GM12878 (cell line): ENCODE measurements at regions of chr3 and their contacts with region 1.

Region 1: DNA sequence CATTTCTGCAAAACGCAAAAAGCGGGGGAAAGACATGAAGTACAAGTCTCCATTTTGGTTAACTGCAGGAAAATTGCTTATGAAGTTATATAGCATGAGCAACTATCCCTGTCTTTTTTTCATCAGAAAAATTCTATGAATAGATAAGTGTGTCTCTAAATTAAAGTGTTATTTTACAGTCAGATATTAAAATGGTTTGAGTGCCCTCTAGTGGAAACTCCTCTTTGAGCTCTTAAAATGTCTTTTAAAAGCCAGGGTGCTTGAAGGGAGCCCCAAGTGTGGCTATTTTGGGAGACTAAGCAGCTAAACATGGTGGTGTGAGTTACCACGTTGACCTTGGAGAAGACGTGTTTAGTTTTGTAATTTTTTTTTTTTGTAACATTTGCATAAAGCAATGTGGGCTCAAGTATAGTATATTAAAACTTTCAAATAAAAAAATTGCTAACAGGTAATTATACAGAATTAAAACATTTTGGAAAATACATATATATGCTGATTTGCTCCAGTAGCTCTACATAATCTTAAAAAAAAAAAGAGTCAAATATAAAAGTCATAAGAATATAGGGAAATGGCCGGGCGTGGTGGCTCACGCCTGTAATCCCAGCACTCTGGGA is 77.2 kb downstream of the PPP2R3A start:
- DNase-seq: no peak
- ATAC-seq: peak; percentile 55; the same call in 2 of the 3 replicates
- H3K4me3 ChIP-seq: no peak overlapping the region
- H3K27ac ChIP-seq: no peak overlapping the region
- H3K4me1 ChIP-seq: no peaks in the 10 kb centered on the region
- H3K27me3 ChIP-seq: no peaks in the 10 kb centered on the region; a peak in 1 of 4 replicates
- CTCF ChIP-seq: peak; percentile 28 to 57 (median 48); a peak in 5 of 6 replicates
- EP300 ChIP-seq: no peak
- POLR2A ChIP-seq: no peak
- RAD21 ChIP-seq: peak; percentile 53

Region 2: GRCh38 chr3:135674508-135674907 is 368.2 kb before region 1 on chr3:
- CTCF ChIA-PET with region 1: no interaction called
- POLR2A ChIA-PET with region 1: no interaction called
- RAD21 ChIA-PET with region 1: no interaction called
- SMC1A ChIA-PET with region 1: no interaction called
- in situ Hi-C with region 1: no loop called
- intact Hi-C with region 1: no loop called
- DNase-seq: no peak
- ATAC-seq: no peak
- H3K4me3 ChIP-seq: no peak overlapping the region
- H3K27ac ChIP-seq: no peak overlapping the region
- H3K4me1 ChIP-seq: no peaks in the 10 kb centered on the region
- H3K27me3 ChIP-seq: no peaks in the 10 kb centered on the region
- CTCF ChIP-seq: no peak
- EP300 ChIP-seq: no peak
- POLR2A ChIP-seq: no peak
- RAD21 ChIP-seq: no peak

Region 3: GRCh38 chr3:135736740-135737139 is 306.0 kb before region 1 on chr3:
- CTCF ChIA-PET with region 1: interaction called, 7 read pairs
- POLR2A ChIA-PET with region 1: no interaction called
- RAD21 ChIA-PET with region 1: no interaction called
- SMC1A ChIA-PET with region 1: no interaction called
- in situ Hi-C with region 1: no loop called
- intact Hi-C with region 1: loop called (anchors 5 kb)
- DNase-seq: no peak
- ATAC-seq: peak; percentile 67
- H3K4me3 ChIP-seq: no peak overlapping the region
- H3K27ac ChIP-seq: no peak overlapping the region
- H3K4me1 ChIP-seq: no peaks in the 10 kb centered on the region
- H3K27me3 ChIP-seq: 0 out of 4 replicates have a peak, but pooled peaks cover 0 to 3% of the 10 kb centered on the region in 2 experiments
- CTCF ChIP-seq: peak in 2 of 3 experiments; percentile 20 to 27; a peak in 3 of 6 replicates
- EP300 ChIP-seq: no peak
- POLR2A ChIP-seq: no peak
- RAD21 ChIP-seq: no peak

Region 4: GRCh38 chr3:135918580-135918962 is 124.1 kb before region 1 on chr3:
- CTCF ChIA-PET with region 1: interaction called, 18 read pairs
- POLR2A ChIA-PET with region 1: no interaction called
- RAD21 ChIA-PET with region 1: interaction called, 4 read pairs
- SMC1A ChIA-PET with region 1: interaction called, 4 read pairs
- in situ Hi-C with region 1: no loop called
- intact Hi-C with region 1: loop called (anchors 2 kb)
- DNase-seq: no peak
- ATAC-seq: peak; percentile 32; the same call in 1 of the 3 replicates
- H3K4me3 ChIP-seq: no peak overlapping the region
- H3K27ac ChIP-seq: no peak overlapping the region
- H3K4me1 ChIP-seq: no peaks in the 10 kb centered on the region
- H3K27me3 ChIP-seq: no peaks in the 10 kb centered on the region; a peak in 1 of 4 replicates
- CTCF ChIP-seq: peak in 2 of 3 experiments; percentile 16 to 24; a peak in 1 of 6 replicates
- EP300 ChIP-seq: no peak
- POLR2A ChIP-seq: no peak
- RAD21 ChIP-seq: 0 out of 2 replicates have a peak, but pooled peaks have one; percentile 29